ENCODE measurements at regions of chr17 and their contacts with region 1.

Region 1: DNA sequence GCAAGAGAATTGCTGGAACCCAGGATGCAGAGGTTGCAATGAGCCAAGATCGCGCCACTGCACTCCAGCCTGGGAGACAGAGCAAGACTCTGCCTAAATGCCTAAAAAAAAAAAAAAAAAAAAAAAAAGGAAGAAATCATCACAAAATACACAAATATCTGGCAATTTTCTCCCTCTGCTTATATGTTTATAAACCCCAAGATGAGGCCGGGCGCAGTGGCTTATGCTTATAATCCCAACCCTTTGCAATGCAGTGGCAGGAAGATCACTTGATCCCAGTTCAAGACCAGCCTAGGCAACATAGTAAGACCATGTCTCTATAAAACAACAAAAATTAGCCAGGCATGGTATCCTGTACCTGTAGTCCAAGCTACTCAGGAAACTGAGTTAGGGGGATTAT is 21.5 kb downstream of the MED1 start:
- H3K4me3 ChIP-seq: no peak overlapping the region
- H3K27ac ChIP-seq: no peak overlapping the region
- H3K4me1 ChIP-seq: no peaks in the 10 kb centered on the region
- CTCF ChIP-seq: no peak

Region 2: GRCh38 chr17:39450847-39451581 is 21.4 kb after region 1 on chr17 and contains the start of gene MED1:
- CTCF ChIA-PET with region 1: no interaction called
- POLR2A ChIA-PET with region 1: no interaction called
- H3K4me3 ChIP-seq: peak within 1 kb of the TSS; percentile 84
- H3K27ac ChIP-seq: peak within 1 kb of the TSS; percentile 83
- H3K4me1 ChIP-seq: no peaks in the 10 kb centered on the region
- CTCF ChIP-seq: no peak

Region 3: DNA sequence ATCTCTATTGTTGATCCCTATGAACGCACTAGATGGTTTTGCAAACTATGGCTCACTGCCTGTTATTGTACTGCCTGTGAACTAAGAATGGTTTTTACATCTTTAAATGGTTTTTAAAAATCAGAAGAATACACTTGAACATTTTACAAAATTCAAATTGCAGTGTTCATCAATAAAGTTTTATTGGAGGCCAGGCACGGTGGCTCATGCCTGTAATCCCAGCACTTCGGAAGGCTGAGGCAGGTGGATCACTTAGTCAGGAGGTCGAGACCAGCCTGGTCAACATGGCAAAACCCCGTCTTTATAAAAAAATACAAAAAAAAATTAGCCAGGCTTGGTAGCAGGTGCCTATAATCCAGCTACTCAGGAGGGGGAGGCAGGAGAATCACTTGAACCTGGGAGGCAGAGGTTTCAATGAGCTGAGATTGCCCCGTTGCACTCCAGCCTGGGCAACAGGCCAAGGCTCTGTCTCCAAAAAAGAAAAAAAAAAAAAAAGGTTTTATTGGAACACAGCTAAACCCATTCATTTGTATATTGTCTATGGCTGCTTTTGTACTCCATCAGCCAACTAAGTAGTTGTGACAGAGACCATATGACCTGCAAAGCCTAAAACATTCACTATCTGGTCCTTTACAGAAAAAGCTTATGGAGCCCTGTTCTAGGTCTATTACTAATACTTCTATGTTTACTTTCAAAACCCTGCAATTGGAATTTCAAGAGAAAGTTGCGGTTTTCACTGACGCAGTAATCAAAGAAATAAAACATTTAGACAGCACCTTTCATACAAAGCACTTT is 415.6 kb after region 1 on chr17:
- CTCF ChIA-PET with region 1: no interaction called
- POLR2A ChIA-PET with region 1: interaction called, 12 read pairs
- H3K4me3 ChIP-seq: no peak overlapping the region
- H3K27ac ChIP-seq: no peak overlapping the region
- H3K4me1 ChIP-seq: peaks cover 25% of the 10 kb centered on the region
- CTCF ChIP-seq: no peak